CD8-positive, alpha-beta T cell (primary cell): ENCODE measurements at regions of chr5 and their contacts with region 1.

Region 1: DNA sequence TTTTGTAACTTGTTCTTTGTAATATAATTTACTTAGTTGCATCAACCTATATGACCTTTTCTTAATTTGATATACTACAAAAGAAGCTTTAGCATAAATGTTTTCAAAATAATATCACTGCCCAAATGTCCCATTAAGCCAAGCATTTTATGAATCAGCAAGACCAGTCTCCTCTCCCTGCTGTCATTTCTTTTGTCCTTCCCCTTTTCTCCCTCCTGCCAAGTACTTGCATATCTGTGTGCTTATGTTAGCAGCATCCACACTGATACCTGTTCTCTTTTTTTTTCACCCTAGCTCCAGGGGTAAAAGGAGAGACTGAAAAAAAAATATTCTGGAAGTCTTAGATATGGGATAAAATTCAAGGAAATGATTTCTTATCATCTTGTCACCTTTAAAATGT is 69.7 kb downstream of the ZSWIM6 start:
- DNase-seq: no peak
- ATAC-seq: no peak
- H3K4me3 ChIP-seq: no peak overlapping the region
- H3K4me3 Mint-ChIP-seq: no peak overlapping the region
- H3K27ac ChIP-seq: no peak overlapping the region
- H3K27ac Mint-ChIP-seq: no peak overlapping the region
- H3K4me1 ChIP-seq: no peaks in the 10 kb centered on the region
- H3K4me1 Mint-ChIP-seq: peaks cover 31% of the 10 kb centered on the region
- H3K27me3 ChIP-seq: no peaks in the 10 kb centered on the region
- H3K27me3 Mint-ChIP-seq: no peaks in the 10 kb centered on the region
- CTCF ChIP-seq: no peak

Region 2: GRCh38 chr5:61366497-61367240 is 35.1 kb before region 1 on chr5:
- CTCF ChIA-PET with region 1: no interaction called
- POLR2A ChIA-PET with region 1: no interaction called
- intact Hi-C with region 1: loop called in 1 of 2 experiments (anchors 5 kb)
- DNase-seq: no peak
- ATAC-seq: no peak
- H3K4me3 ChIP-seq: no peak overlapping the region
- H3K4me3 Mint-ChIP-seq: no peak overlapping the region
- H3K27ac ChIP-seq: no peak overlapping the region
- H3K27ac Mint-ChIP-seq: no peak overlapping the region
- H3K4me1 ChIP-seq: no peaks in the 10 kb centered on the region
- H3K4me1 Mint-ChIP-seq: peaks cover 15% of the 10 kb centered on the region
- H3K27me3 ChIP-seq: no peaks in the 10 kb centered on the region
- H3K27me3 Mint-ChIP-seq: no peaks in the 10 kb centered on the region
- CTCF ChIP-seq: no peak

Region 3: GRCh38 chr5:61603211-61603908 is 201.6 kb after region 1 on chr5:
- CTCF ChIA-PET with region 1: no interaction called
- POLR2A ChIA-PET with region 1: no interaction called
- intact Hi-C with region 1: no loop called
- DNase-seq: no peak
- ATAC-seq: no peak
- H3K4me3 ChIP-seq: no peak overlapping the region
- H3K4me3 Mint-ChIP-seq: no peak overlapping the region
- H3K27ac ChIP-seq: no peak overlapping the region
- H3K27ac Mint-ChIP-seq: no peak overlapping the region
- H3K4me1 ChIP-seq: no peaks in the 10 kb centered on the region
- H3K4me1 Mint-ChIP-seq: no peaks in the 10 kb centered on the region
- H3K27me3 ChIP-seq: no peaks in the 10 kb centered on the region
- H3K27me3 Mint-ChIP-seq: peaks cover 9% of the 10 kb centered on the region
- CTCF ChIP-seq: no peak